Gastrocnemius medialis (tissue), 4 donors: ENCODE measurements at regions of chr3 and their contacts with region 1.

Region 1: GRCh38 chr3:169699536-169700050 is 36.1 kb upstream of the MECOM start:
- DNase-seq: peak; percentile 85 to 89
- ATAC-seq: peak; percentile 93 to 95
- H3K4me3 ChIP-seq: peak overlapping the region in 2 of 4 donors; percentile 0 to 17
- H3K27ac ChIP-seq: peak overlapping the region; percentile 72 to 84 (median 78)
- H3K4me1 ChIP-seq: peaks cover 20 to 22% of the 10 kb centered on the region in 2 donors
- H3K27me3 ChIP-seq: no peaks in the 10 kb centered on the region
- CTCF ChIP-seq: no peak
- POLR2A ChIP-seq: no peak

Region 2: DNA sequence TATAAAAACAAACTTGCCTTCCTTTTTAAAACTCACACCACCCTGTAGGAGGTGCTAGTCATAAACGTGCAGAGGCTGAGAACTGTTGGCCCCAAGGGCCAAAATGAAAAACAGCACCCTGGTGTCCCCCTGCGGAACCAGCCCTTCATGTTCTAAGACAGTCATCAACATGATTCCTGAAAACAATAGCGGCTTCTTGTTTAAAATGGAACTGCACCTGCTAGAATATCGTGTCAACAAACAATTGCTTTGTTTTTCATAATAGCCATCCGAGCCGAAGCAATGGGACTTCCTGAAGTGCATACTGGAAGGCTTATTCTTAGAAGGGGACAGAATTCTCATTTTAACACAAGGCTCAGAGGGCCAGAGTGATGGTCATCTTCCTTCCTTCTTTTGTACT is 79.8 kb before region 1 on chr3:
- in situ Hi-C with region 1: no loop called
- intact Hi-C with region 1: loop called (anchors 5 kb)
- DNase-seq: no peak
- ATAC-seq: peak; percentile 27 to 87
- H3K4me3 ChIP-seq: no peak overlapping the region
- H3K27ac ChIP-seq: peak overlapping the region; percentile 64 to 74 (median 70)
- H3K4me1 ChIP-seq: no peaks in the 10 kb centered on the region
- H3K27me3 ChIP-seq: no peaks in the 10 kb centered on the region
- CTCF ChIP-seq: no peak
- POLR2A ChIP-seq: no peak

Region 3: GRCh38 chr3:169686874-169687273 is 12.7 kb before region 1 on chr3:
- in situ Hi-C with region 1: no loop called
- intact Hi-C with region 1: no loop called
- DNase-seq: no peak
- ATAC-seq: no peak
- H3K4me3 ChIP-seq: no peak overlapping the region
- H3K27ac ChIP-seq: no peak overlapping the region
- H3K4me1 ChIP-seq: no peaks in the 10 kb centered on the region
- H3K27me3 ChIP-seq: no peaks in the 10 kb centered on the region
- CTCF ChIP-seq: no peak
- POLR2A ChIP-seq: no peak

Region 4: DNA sequence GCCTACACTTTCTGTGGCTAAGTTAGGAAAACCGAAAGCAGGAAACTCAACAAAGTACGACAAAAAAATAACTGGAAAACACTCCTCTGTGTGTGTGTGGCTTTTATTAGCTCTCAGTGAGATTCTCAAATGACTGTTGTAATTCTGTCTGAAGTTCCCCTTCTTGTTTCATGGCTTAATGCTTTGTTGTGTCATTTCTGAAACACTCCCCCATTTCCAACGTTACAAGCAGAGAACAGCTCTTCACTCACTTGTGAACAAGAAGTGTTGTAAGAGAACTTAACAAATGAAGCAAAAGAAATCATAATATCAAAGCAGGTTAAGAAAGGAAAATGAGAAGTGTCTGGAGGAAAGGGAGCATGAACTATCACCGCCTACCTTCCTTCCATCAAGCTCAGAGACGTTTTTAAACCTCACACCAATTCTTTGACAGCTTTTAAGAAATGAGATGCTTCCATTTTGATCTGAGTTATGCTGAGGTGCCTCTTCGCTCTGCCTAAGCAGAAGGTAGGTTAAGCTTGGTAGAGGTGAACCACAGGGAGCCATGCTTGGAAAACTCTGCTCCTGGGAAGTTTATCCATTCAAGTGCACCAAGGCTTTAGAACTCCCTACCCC is 254.7 kb after region 1 on chr3:
- in situ Hi-C with region 1: no loop called
- intact Hi-C with region 1: no loop called
- DNase-seq: no peak
- ATAC-seq: no peak
- H3K4me3 ChIP-seq: no peak overlapping the region
- H3K27ac ChIP-seq: no peak overlapping the region
- H3K4me1 ChIP-seq: no peaks in the 10 kb centered on the region
- H3K27me3 ChIP-seq: peaks cover 0 to 3% (median 0%) of the 10 kb centered on the region in 3 donors
- CTCF ChIP-seq: no peak
- POLR2A ChIP-seq: no peak